CD8-positive, alpha-beta T cell (primary cell): ENCODE measurements at regions of chrX and their contacts with region 1.

Region 1: DNA sequence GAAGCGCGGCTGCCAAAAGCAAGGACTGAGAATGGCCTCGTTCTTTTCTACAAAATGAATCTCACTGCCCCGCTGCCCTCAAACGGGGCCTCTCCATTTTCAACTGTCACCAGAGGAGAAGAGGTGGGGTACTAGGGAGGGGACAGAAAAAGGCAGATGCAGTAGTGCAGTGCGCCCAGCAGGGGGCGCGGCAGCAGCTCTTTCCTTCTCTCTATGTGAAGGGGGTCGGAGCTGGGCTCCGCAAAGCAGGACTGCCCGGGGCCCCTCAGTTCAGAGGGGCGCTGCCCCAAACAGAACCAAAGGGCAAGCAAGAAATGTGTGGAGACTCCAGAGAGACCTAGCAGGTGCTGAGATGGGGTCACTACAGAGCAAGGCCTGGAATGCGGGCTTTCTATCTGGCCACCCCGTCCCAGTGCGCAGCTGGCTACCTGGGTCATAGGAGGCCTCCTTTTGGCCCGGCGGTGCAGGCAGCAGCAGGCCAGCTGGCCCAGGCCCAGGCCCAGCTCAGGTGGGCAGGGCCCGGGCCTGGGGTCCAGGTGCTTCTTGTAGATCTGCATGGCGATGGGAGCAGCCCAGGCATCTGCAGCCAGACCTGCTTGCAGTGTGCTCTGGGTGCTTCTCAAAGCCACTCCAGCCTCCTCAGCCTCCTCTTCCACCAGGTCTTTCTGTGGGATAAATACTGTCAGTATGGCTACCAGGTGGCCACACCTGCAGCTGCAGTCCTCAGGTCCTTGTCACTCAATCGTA is 5.9 kb downstream of the IRAK1 start:
- DNase-seq: peak in 8 of 9 experiments; percentile 25 to 72 (median 58)
- ATAC-seq: peak; percentile 87
- H3K4me3 ChIP-seq: no peak overlapping the region
- H3K4me3 Mint-ChIP-seq: no peak overlapping the region
- H3K27ac ChIP-seq: no peak overlapping the region
- H3K27ac Mint-ChIP-seq: no peak overlapping the region
- H3K4me1 ChIP-seq: peaks cover 15% of the 10 kb centered on the region
- H3K4me1 Mint-ChIP-seq: peaks cover 19% of the 10 kb centered on the region
- H3K27me3 ChIP-seq: no peaks in the 10 kb centered on the region
- H3K27me3 Mint-ChIP-seq: no peaks in the 10 kb centered on the region
- CTCF ChIP-seq: peak; percentile 73

Region 2: GRCh38 chrX:153989973-153990655 is 23.7 kb before region 1 on chrX:
- CTCF ChIA-PET with region 1: interaction called, 14 read pairs
- POLR2A ChIA-PET with region 1: no interaction called
- intact Hi-C with region 1: no loop called
- DNase-seq: peak in 2 of 9 experiments; percentile 45 to 64
- ATAC-seq: no peak
- H3K4me3 ChIP-seq: no peak overlapping the region
- H3K4me3 Mint-ChIP-seq: peak overlapping the region; percentile 63
- H3K27ac ChIP-seq: peak overlapping the region in 1 of 2 experiments; percentile 36
- H3K27ac Mint-ChIP-seq: peak overlapping the region; percentile 88
- H3K4me1 ChIP-seq: peaks cover 29% of the 10 kb centered on the region
- H3K4me1 Mint-ChIP-seq: peaks cover 22% of the 10 kb centered on the region
- H3K27me3 ChIP-seq: no peaks in the 10 kb centered on the region
- H3K27me3 Mint-ChIP-seq: no peaks in the 10 kb centered on the region
- CTCF ChIP-seq: no peak

Region 3: GRCh38 chrX:154002215-154002719 is 11.5 kb before region 1 on chrX:
- CTCF ChIA-PET with region 1: interaction called, 18 read pairs
- POLR2A ChIA-PET with region 1: interaction called, 4 read pairs
- intact Hi-C with region 1: no loop called
- DNase-seq: peak in 7 of 9 experiments; percentile 31 to 80 (median 56)
- ATAC-seq: peak; percentile 83
- H3K4me3 ChIP-seq: peak overlapping the region; percentile 22 to 36
- H3K4me3 Mint-ChIP-seq: peak overlapping the region; percentile 81
- H3K27ac ChIP-seq: peak overlapping the region in 1 of 2 experiments; percentile 64
- H3K27ac Mint-ChIP-seq: peak overlapping the region; percentile 72
- H3K4me1 ChIP-seq: peaks cover 10% of the 10 kb centered on the region
- H3K4me1 Mint-ChIP-seq: peaks cover 12% of the 10 kb centered on the region
- H3K27me3 ChIP-seq: no peaks in the 10 kb centered on the region
- H3K27me3 Mint-ChIP-seq: no peaks in the 10 kb centered on the region
- CTCF ChIP-seq: no peak